ENCODE measurements at regions of chr15 and their contacts with region 1.

Region 1: DNA sequence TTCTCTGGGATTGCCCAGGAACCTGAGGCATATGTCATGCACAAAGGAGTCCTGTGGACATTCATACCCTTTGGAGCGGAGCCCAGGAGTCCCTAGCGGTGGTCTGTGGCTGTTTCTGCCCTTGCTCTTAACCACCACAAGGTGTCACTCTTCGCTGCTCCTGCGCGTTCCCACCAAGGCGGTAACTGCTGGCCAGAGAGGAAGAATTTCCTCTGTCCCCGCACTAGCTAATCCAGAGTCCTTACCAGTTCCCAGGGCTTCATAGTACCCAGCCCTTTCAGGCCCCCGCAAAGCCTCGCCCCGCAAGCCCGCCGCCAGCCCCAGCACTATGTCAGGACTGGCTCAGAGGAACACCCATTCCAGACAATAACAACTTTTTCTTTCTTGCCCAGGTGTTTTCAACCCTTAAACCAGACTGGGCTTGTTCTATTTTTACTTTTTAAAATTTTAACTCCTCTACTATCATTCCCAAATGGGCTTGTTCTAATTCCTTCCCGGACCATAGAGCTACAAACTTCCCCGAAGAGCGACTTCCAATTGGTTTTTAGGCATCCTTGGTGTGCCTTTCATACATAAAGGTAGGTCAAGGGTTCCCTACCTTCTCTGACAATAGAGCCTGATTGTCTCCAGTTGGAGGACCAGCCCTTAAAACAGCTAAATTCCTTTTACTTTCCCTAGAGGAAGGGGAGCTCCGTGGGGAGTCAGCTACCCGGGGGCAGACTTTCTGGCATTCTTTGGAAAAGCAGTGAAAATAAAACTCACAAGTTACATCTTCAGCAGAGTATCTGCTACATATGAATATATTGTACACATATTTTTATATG is 31.8 kb upstream of the ZNF774 start:
- DNase-seq: peak; percentile 42
- ATAC-seq: peak; percentile 100
- H3K4me3 Mint-ChIP-seq: peak overlapping the region; percentile 5
- H3K27ac Mint-ChIP-seq: no peak overlapping the region
- H3K4me1 Mint-ChIP-seq: peaks cover 2% of the 10 kb centered on the region
- H3K27me3 Mint-ChIP-seq: no peaks in the 10 kb centered on the region
- CTCF ChIP-seq: no peak

Region 2: GRCh38 chr15:90306560-90306959 is 13.7 kb before region 1 on chr15:
- CTCF ChIA-PET with region 1: interaction called, 19 read pairs
- POLR2A ChIA-PET with region 1: interaction called, 4 read pairs
- intact Hi-C with region 1: no loop called
- DNase-seq: no peak
- ATAC-seq: peak; percentile 72
- H3K4me3 Mint-ChIP-seq: no peak overlapping the region
- H3K27ac Mint-ChIP-seq: peak overlapping the region; percentile 12
- H3K4me1 Mint-ChIP-seq: peaks cover 14% of the 10 kb centered on the region
- H3K27me3 Mint-ChIP-seq: no peaks in the 10 kb centered on the region
- CTCF ChIP-seq: no peak

Region 3: GRCh38 chr15:90436952-90437351 is 116.7 kb after region 1 on chr15:
- CTCF ChIA-PET with region 1: interaction called, 3 read pairs
- POLR2A ChIA-PET with region 1: no interaction called
- intact Hi-C with region 1: loop called (anchors 5 kb)
- DNase-seq: no peak
- ATAC-seq: no peak
- H3K4me3 Mint-ChIP-seq: no peak overlapping the region
- H3K27ac Mint-ChIP-seq: no peak overlapping the region
- H3K4me1 Mint-ChIP-seq: peaks cover 5% of the 10 kb centered on the region
- H3K27me3 Mint-ChIP-seq: no peaks in the 10 kb centered on the region
- CTCF ChIP-seq: no peak

Region 4: DNA sequence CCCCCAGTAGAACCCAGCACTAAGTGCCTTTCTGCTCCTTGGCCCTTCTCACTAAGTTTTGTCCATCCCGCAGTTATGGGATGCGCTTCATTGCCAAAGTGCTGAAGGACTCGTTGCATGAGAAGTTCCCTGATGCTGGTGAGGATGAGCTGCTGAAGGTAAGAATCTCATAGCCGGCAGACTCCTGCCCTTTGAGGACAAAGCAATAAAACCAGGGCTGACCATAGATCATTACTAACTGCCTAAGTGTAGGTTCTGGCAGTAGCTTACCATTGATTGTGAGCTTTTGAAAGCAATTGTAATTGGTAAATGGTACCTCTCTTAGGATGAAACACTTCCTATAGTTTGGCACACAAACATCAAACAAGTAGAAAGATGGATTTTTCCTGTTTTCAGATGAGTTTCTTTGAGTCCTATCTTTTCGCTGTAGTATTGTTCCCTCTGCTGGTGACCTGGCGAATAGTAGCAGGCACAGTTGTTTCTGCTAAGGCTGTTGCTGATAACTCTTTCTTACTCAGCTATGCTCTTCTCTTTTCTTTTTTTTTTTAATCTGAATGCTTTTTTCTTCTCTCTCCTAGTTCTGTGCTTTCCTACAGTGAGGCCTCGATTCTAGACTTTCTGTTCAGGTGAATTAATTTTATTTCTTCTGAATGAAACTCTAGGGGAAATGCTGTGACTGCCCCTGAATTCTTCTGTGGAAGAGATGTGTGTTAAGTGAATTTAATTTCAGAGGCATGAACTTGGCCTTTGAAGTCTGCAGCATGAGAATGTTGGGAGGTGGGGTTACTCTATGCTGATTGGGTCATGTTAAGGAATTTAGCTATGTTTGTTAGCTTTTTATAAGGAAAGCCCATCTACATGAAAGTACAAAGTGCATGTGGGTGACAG is 162.1 kb after region 1 on chr15:
- CTCF ChIA-PET with region 1: interaction called, 77 read pairs
- POLR2A ChIA-PET with region 1: no interaction called
- intact Hi-C with region 1: loop called (anchors 1 kb)
- DNase-seq: no peak
- ATAC-seq: no peak
- H3K4me3 Mint-ChIP-seq: no peak overlapping the region
- H3K27ac Mint-ChIP-seq: no peak overlapping the region
- H3K4me1 Mint-ChIP-seq: peaks cover 48% of the 10 kb centered on the region
- H3K27me3 Mint-ChIP-seq: no peaks in the 10 kb centered on the region
- CTCF ChIP-seq: no peak

Region 5: GRCh38 chr15:91049378-91050127 is 729.3 kb after region 1 on chr15:
- CTCF ChIA-PET with region 1: no interaction called
- POLR2A ChIA-PET with region 1: no interaction called
- intact Hi-C with region 1: loop called (anchors 1 kb)
- DNase-seq: no peak
- ATAC-seq: peak; percentile 83
- H3K4me3 Mint-ChIP-seq: no peak overlapping the region
- H3K27ac Mint-ChIP-seq: no peak overlapping the region
- H3K4me1 Mint-ChIP-seq: peaks cover 17% of the 10 kb centered on the region
- H3K27me3 Mint-ChIP-seq: peaks cover 20% of the 10 kb centered on the region
- CTCF ChIP-seq: no peak